ENCODE measurements at regions of chr4 and their contacts with region 1.

Region 1: DNA sequence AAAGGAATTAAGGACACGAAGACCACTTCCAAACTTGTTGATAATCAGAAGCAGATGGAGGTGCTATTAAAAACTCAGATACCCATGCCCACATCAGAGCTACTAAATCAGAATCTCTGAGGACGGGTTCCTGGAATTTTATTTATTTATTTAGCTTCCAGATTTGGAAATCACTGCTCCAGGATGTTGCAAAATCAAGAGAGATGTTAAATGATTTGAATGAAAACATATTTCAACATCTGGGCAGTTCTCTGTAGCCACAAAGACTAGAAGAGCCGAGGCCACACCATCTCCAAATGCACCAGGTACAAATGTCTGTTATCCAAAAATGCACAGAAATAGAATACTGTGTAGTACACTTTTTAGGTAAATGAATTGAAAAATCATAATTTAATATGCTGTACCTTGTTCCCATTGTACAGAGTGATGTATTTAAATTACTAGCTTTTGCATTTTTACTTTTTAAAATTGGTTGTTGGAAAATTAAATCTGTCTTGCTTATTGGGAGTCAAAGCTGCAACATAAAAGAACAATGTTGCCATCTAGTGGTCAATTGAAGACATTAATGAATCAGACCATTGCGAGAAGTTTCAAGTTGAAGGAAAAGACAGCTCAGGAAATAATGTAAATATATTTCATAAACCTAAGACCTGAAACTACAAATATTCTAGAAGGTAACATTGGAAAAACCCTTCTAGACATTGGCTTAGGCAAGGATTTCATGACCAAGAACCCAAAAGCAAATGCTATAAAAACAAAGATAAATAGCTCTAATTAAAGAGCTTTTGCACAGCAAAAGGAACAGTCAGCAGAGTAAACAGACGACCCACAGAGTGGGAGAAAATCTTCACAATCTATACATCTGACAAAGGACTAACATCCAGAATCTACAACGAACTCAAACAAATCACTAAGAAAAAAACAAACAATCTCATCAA is 151.3 kb upstream of the TTC29 start:
- DNase-seq: peak; percentile 33 to 47 (median 42)
- ATAC-seq: peak; percentile 65; the same call in 2 of the 3 replicates
- H3K4me3 ChIP-seq: no peak overlapping the region
- H3K27ac ChIP-seq: no peak overlapping the region
- H3K4me1 ChIP-seq: no peaks in the 10 kb centered on the region
- H3K27me3 ChIP-seq: no peaks in the 10 kb centered on the region
- CTCF ChIP-seq: peak; percentile 22 to 63 (median 38); a peak in 3 of 6 replicates
- EP300 ChIP-seq: no peak
- POLR2A ChIP-seq: no peak
- RAD21 ChIP-seq: peak; percentile 50 to 60; a peak in 3 of 4 replicates

Region 2: GRCh38 chr4:146844761-146845160 is 252.2 kb before region 1 on chr4:
- CTCF ChIA-PET with region 1: no interaction called
- POLR2A ChIA-PET with region 1: no interaction called
- in situ Hi-C with region 1: no loop called
- intact Hi-C with region 1: no loop called
- DNase-seq: no peak
- ATAC-seq: no peak
- H3K4me3 ChIP-seq: no peak overlapping the region
- H3K27ac ChIP-seq: no peak overlapping the region
- H3K4me1 ChIP-seq: no peaks in the 10 kb centered on the region
- H3K27me3 ChIP-seq: no peaks in the 10 kb centered on the region; a peak in 1 of 5 replicates
- CTCF ChIP-seq: no peak
- EP300 ChIP-seq: no peak
- POLR2A ChIP-seq: no peak
- RAD21 ChIP-seq: no peak

Region 3: GRCh38 chr4:146927695-146928094 is 169.2 kb before region 1 on chr4:
- CTCF ChIA-PET with region 1: no interaction called
- POLR2A ChIA-PET with region 1: no interaction called
- in situ Hi-C with region 1: no loop called
- intact Hi-C with region 1: loop called (anchors 10 kb)
- DNase-seq: no peak
- ATAC-seq: no peak
- H3K4me3 ChIP-seq: no peak overlapping the region
- H3K27ac ChIP-seq: no peak overlapping the region
- H3K4me1 ChIP-seq: no peaks in the 10 kb centered on the region
- H3K27me3 ChIP-seq: no peaks in the 10 kb centered on the region
- CTCF ChIP-seq: no peak
- EP300 ChIP-seq: no peak
- POLR2A ChIP-seq: no peak
- RAD21 ChIP-seq: no peak

Region 4: GRCh38 chr4:147019061-147019460 is 77.9 kb before region 1 on chr4:
- CTCF ChIA-PET with region 1: interaction called, 9 read pairs
- POLR2A ChIA-PET with region 1: interaction called, 3 read pairs
- in situ Hi-C with region 1: no loop called
- intact Hi-C with region 1: loop called (anchors 1 kb)
- DNase-seq: peak; percentile 43 to 68 (median 55)
- ATAC-seq: peak; percentile 91
- H3K4me3 ChIP-seq: no peak overlapping the region
- H3K27ac ChIP-seq: no peak overlapping the region
- H3K4me1 ChIP-seq: no peaks in the 10 kb centered on the region
- H3K27me3 ChIP-seq: no peaks in the 10 kb centered on the region
- CTCF ChIP-seq: peak; percentile 64 to 72 (median 68)
- EP300 ChIP-seq: no peak
- POLR2A ChIP-seq: no peak
- RAD21 ChIP-seq: peak; percentile 58 to 70